Adrenal gland (tissue), 19 donors: ENCODE measurements at regions of chr6 and their contacts with region 1.

Region 1: GRCh38 chr6:15429141-15430110 is 183.6 kb downstream of the JARID2 start:
- DNase-seq: no peak
- H3K4me3 ChIP-seq: no peak overlapping the region
- H3K27ac ChIP-seq: peak overlapping the region in 1 of 5 donors; percentile 19
- H3K4me1 ChIP-seq: peaks cover 0 to 43% of the 10 kb centered on the region in 2 donors
- H3K27me3 ChIP-seq: no peaks in the 10 kb centered on the region
- CTCF ChIP-seq: no peak
- POLR2A ChIP-seq: no peak

Region 2: GRCh38 chr6:15312500-15312899 is 116.9 kb before region 1 on chr6:
- intact Hi-C with region 1: loop called in 1 of 2 experiments (anchors 10 kb)
- DNase-seq: no peak
- H3K4me3 ChIP-seq: no peak overlapping the region
- H3K27ac ChIP-seq: peak overlapping the region in 4 of 5 donors; percentile 23 to 83 (median 48)
- H3K4me1 ChIP-seq: peaks cover 20 to 59% of the 10 kb centered on the region in 2 donors
- H3K27me3 ChIP-seq: no peaks in the 10 kb centered on the region
- CTCF ChIP-seq: no peak
- POLR2A ChIP-seq: no peak

Region 3: GRCh38 chr6:15351631-15352030 is 77.8 kb before region 1 on chr6:
- intact Hi-C with region 1: no loop called
- DNase-seq: peak; percentile 38 to 67 (median 60)
- H3K4me3 ChIP-seq: no peak overlapping the region
- H3K27ac ChIP-seq: no peak overlapping the region
- H3K4me1 ChIP-seq: peaks cover 0 to 19% of the 10 kb centered on the region in 2 donors
- H3K27me3 ChIP-seq: no peaks in the 10 kb centered on the region
- CTCF ChIP-seq: no peak
- POLR2A ChIP-seq: no peak